ENCODE measurements at regions of chr16 and their contacts with region 1.

Region 1: GRCh38 chr16:69132424-69133252 is at the starts of genes CHTF8 and UTP4:
- DNase-seq: peak; percentile 72 to 82
- ATAC-seq: peak; percentile 95 to 97
- H3K4me3 ChIP-seq: peak within 1 kb of the TSS; percentile 79 to 97 (median 86)
- H3K27ac ChIP-seq: peak within 1 kb of the TSS; percentile 86 to 94 (median 92)
- H3K4me1 ChIP-seq: peaks cover 26 to 29% of the 10 kb centered on the region in 2 donors
- H3K27me3 ChIP-seq: no peaks in the 10 kb centered on the region
- CTCF ChIP-seq: no peak
- POLR2A ChIP-seq: peak; percentile 97 to 98
- total RNA-seq, gene CHTF8: 27.3 to 52.3 (median 34.8) TPM
- total RNA-seq, gene UTP4: 33.1 to 44.2 (median 35.5) TPM

Region 2: DNA sequence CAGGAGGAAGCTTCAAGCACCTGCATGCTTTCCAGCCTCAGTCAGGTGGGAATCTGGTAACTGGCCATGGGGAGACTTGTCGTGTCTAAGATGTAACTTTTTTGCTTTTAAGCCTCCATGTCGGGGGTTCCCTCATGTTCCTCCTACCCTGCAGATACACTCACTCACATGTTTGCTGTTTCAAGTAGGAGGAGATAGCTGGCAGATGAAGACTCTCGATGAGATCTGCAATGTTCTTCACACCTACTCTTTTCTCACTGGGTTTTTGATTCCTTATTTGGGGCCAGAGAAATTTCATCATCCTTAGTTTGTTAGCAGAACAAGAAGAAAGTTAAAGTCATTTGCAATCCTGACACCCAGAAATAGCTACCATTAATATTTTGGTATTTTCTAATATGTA is 24.6 kb after region 1 on chr16:
- in situ Hi-C with region 1: no loop called
- intact Hi-C with region 1: no loop called
- DNase-seq: no peak
- ATAC-seq: no peak
- H3K4me3 ChIP-seq: no peak overlapping the region
- H3K27ac ChIP-seq: no peak overlapping the region
- H3K4me1 ChIP-seq: no peaks in the 10 kb centered on the region
- H3K27me3 ChIP-seq: no peaks in the 10 kb centered on the region
- CTCF ChIP-seq: no peak
- POLR2A ChIP-seq: no peak

Region 3: GRCh38 chr16:69171325-69172084 is 38.9 kb after region 1 on chr16:
- in situ Hi-C with region 1: no loop called
- intact Hi-C with region 1: loop called (anchors 2 kb)
- DNase-seq: no peak
- ATAC-seq: no peak
- H3K4me3 ChIP-seq: no peak overlapping the region
- H3K27ac ChIP-seq: peak overlapping the region; percentile 19 to 74 (median 59)
- H3K4me1 ChIP-seq: peaks cover 0 to 12% of the 10 kb centered on the region in 2 donors
- H3K27me3 ChIP-seq: no peaks in the 10 kb centered on the region
- CTCF ChIP-seq: no peak
- POLR2A ChIP-seq: no peak

Region 4: DNA sequence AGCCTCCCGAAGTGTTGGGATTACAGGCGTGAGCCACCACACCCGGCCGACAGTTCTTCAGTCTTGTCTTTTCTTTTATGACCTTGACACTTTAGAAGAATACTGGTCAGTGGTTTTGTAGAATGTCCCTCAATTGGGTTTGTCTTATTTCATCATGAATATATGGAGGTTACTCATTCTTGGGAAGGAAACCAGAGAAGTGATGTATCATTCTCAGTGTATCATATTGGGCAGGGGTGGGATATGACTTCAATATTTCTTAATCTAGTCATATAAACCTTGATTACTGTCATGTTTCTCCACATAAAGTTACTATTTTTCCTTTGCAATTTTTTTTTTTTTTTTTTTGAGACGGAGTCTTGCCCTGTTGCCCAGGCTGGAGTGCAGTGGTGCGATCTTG is 91.2 kb after region 1 on chr16:
- in situ Hi-C with region 1: no loop called
- intact Hi-C with region 1: no loop called
- DNase-seq: no peak
- ATAC-seq: no peak
- H3K4me3 ChIP-seq: no peak overlapping the region
- H3K27ac ChIP-seq: no peak overlapping the region
- H3K4me1 ChIP-seq: peaks cover 4 to 7% of the 10 kb centered on the region in 2 donors
- H3K27me3 ChIP-seq: no peaks in the 10 kb centered on the region
- CTCF ChIP-seq: no peak
- POLR2A ChIP-seq: no peak

Region 5: DNA sequence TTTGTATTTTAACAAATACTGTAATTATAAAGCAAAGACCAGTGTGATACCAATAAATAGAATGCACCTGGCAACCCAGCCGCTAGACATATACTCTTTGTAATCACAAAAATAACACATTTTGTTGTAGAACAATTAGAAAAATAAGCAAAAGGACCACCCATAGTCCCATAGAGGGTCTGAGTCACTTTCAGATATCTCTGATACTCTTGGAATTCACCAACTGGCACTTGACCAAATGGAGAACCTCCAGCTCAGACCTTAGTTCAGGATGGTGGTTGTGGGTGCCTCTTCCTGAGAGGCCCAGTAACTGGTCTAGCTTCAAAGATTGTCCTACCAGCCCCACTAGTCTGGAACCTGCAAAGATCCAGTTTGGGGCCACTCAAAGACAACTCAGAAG is 254.0 kb after region 1 on chr16:
- in situ Hi-C with region 1: no loop called
- intact Hi-C with region 1: loop called (anchors 1 kb)
- DNase-seq: no peak
- ATAC-seq: no peak
- H3K4me3 ChIP-seq: peak overlapping the region in 1 of 4 donors; percentile 82
- H3K27ac ChIP-seq: peak overlapping the region; percentile 84 to 95 (median 86)
- H3K4me1 ChIP-seq: peaks cover 8 to 12% of the 10 kb centered on the region in 2 donors
- H3K27me3 ChIP-seq: no peaks in the 10 kb centered on the region
- CTCF ChIP-seq: no peak
- POLR2A ChIP-seq: no peak